ENCODE measurements at regions of chr7 and their contacts with region 1.

Region 1: DNA sequence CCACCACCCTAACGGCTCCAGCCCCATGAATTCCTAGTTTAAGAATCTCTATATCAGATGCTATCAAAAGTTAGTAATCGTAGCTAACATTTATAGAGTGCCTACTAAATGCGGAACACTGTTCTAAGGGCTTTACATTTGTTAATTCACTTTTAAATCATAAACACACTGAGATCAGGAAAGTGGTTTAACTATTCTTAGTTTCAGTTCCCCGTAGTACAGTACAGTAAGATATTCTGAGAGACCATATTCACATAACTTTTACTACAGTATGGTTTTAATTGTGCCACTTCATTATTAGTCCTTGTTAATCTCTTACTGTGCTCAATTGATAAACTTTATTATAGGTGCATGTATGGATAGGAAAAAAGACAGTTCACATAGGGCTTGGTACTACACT is 22.5 kb downstream of the SYPL1 start:
- DNase-seq: peak; percentile 53
- ATAC-seq: peak; percentile 87
- H3K4me3 ChIP-seq: peak overlapping the region in 1 of 5 experiments; percentile 28
- H3K4me3 Mint-ChIP-seq: peak overlapping the region; percentile 72
- H3K27ac ChIP-seq: peak overlapping the region; percentile 63 to 77
- H3K27ac Mint-ChIP-seq: peak overlapping the region; percentile 92
- H3K4me1 ChIP-seq: peaks cover 37 to 69% of the 10 kb centered on the region in 2 donors
- H3K4me1 Mint-ChIP-seq: peaks cover 77% of the 10 kb centered on the region
- H3K27me3 ChIP-seq: no peaks in the 10 kb centered on the region
- H3K27me3 Mint-ChIP-seq: no peaks in the 10 kb centered on the region
- CTCF ChIP-seq: no peak

Region 2: DNA sequence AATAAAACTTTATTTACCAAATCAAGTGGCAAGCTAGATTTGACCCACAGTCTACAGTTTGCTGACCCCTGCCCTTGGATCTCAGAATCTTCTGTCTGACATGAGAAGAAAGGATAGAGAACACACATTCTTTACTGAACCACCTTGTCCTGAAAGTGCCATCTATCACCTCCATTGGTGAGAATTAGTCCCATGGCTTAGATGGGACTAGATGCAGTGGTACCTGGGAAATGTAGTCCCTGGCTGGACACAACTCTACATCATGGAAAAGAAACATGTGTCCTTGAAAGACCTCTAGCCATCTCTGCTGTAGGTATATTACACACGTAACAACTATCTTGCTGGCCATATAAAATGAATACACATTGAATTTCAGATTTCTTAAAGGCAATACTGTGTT is 1425.0 kb before region 1 on chr7:
- CTCF ChIA-PET with region 1: no interaction called
- POLR2A ChIA-PET with region 1: no interaction called
- intact Hi-C with region 1: no loop called
- DNase-seq: no peak
- ATAC-seq: no peak
- H3K4me3 ChIP-seq: no peak overlapping the region
- H3K4me3 Mint-ChIP-seq: no peak overlapping the region
- H3K27ac ChIP-seq: no peak overlapping the region
- H3K27ac Mint-ChIP-seq: no peak overlapping the region
- H3K4me1 ChIP-seq: no peaks in the 10 kb centered on the region
- H3K4me1 Mint-ChIP-seq: no peaks in the 10 kb centered on the region
- H3K27me3 ChIP-seq: no peaks in the 10 kb centered on the region
- H3K27me3 Mint-ChIP-seq: no peaks in the 10 kb centered on the region
- CTCF ChIP-seq: no peak

Region 3: GRCh38 chr7:106071356-106071998 is 18.2 kb before region 1 on chr7:
- CTCF ChIA-PET with region 1: interaction called, 66 read pairs
- POLR2A ChIA-PET with region 1: interaction called, 9 read pairs
- intact Hi-C with region 1: loop called (anchors 1 kb)
- DNase-seq: peak; percentile 90
- ATAC-seq: peak; percentile 87
- H3K4me3 ChIP-seq: peak overlapping the region in 4 of 5 experiments; percentile 33 to 66 (median 45)
- H3K4me3 Mint-ChIP-seq: peak overlapping the region; percentile 85
- H3K27ac ChIP-seq: peak overlapping the region; percentile 95 to 97
- H3K27ac Mint-ChIP-seq: peak overlapping the region; percentile 99
- H3K4me1 ChIP-seq: peaks cover 96 to 100% of the 10 kb centered on the region in 2 donors
- H3K4me1 Mint-ChIP-seq: peaks cover 94% of the 10 kb centered on the region
- H3K27me3 ChIP-seq: no peaks in the 10 kb centered on the region
- H3K27me3 Mint-ChIP-seq: no peaks in the 10 kb centered on the region
- CTCF ChIP-seq: no peak